GM10248 (cell line): ENCODE measurements at regions of chr3 and their contacts with region 1.

Region 1: DNA sequence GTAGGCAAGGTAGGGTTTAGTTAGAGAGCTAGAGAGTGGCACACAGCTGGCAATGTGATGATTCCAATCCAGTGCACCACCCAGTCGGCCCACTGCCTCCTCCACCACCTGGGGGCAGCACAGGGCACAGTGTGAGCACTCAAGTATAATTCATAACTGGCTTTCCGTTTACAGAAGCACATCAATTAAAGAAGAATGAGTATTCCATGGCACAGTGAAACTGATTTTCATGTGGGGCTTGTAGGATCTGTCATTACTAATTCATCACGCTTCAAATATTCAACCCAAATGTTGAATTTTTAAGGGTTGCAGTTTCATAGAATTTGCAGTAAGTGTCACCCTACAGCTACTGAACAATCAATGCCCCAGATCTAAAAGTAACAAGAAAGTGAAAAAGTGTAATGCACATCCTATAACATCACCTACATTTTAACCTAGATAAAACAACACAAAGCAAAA is 149.9 kb downstream of the IGSF11 start:
- DNase-seq: peak; percentile 32
- CTCF ChIP-seq: peak; percentile 88

Region 2: DNA sequence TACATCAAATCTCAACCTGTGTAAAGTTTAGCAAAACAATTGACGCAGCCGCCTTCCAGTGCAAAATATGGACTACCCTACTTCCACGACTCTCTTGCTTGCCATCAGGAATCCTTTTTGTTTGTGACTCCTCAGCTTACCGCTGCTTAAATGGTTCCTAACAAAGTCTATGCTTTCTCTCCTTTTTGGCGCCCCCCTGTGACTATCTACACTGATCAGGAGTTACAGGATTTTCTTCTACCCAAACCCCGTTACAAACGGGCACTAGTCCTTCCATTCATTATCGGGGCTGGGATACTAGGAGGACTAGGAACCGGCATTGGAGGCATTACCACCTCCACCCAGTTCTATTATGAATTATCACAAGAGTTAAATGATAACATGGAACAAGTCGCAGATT is 34.1 kb before region 1 on chr3:
- CTCF ChIA-PET with region 1: interaction called, 14 read pairs
- POLR2A ChIA-PET with region 1: no interaction called
- DNase-seq: no peak
- CTCF ChIP-seq: no peak

Region 3: DNA sequence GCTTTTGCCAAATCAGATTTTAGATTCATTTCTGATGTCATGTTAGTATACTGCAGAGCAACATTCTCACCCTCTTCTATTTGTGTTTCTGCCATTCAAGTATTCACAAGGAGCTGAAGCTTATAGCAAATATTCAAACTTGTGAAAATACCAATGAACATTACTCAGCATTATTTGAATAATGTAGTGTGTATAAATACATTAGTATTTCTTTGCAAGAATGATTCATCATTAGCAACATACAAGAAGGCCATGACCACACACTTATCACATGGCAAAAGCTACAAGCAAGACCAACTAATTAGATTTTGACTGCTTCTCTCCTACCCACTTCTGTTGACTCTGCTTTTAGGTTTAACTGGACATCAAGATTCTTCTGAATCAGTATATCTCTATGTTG is 25.0 kb after region 1 on chr3:
- CTCF ChIA-PET with region 1: interaction called, 35 read pairs
- POLR2A ChIA-PET with region 1: no interaction called
- DNase-seq: no peak
- CTCF ChIP-seq: no peak

Region 4: GRCh38 chr3:119042164-119042563 is 157.4 kb after region 1 on chr3:
- CTCF ChIA-PET with region 1: interaction called, 92 read pairs
- POLR2A ChIA-PET with region 1: no interaction called
- DNase-seq: no peak
- CTCF ChIP-seq: no peak

Region 5: DNA sequence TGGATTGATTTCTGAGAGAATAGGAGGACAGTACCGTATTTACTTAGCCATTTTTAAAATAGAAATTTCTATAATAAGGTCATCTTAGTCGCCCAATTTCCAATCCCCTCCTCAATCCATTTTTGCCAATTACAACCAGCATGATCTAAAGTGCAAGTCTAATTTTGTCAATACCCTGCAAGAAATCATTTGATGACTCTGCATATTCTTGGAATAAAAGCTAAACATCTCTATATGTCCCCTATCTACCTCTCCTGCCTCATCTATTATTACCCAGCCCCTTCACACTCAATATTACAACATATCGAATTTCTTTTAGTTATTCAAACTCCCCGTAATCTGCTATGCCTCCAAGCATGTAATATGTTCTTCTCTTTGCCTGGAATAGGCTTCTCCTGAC is 219.3 kb after region 1 on chr3:
- CTCF ChIA-PET with region 1: interaction called, 240 read pairs
- POLR2A ChIA-PET with region 1: no interaction called
- DNase-seq: no peak
- CTCF ChIP-seq: no peak

Region 6: DNA sequence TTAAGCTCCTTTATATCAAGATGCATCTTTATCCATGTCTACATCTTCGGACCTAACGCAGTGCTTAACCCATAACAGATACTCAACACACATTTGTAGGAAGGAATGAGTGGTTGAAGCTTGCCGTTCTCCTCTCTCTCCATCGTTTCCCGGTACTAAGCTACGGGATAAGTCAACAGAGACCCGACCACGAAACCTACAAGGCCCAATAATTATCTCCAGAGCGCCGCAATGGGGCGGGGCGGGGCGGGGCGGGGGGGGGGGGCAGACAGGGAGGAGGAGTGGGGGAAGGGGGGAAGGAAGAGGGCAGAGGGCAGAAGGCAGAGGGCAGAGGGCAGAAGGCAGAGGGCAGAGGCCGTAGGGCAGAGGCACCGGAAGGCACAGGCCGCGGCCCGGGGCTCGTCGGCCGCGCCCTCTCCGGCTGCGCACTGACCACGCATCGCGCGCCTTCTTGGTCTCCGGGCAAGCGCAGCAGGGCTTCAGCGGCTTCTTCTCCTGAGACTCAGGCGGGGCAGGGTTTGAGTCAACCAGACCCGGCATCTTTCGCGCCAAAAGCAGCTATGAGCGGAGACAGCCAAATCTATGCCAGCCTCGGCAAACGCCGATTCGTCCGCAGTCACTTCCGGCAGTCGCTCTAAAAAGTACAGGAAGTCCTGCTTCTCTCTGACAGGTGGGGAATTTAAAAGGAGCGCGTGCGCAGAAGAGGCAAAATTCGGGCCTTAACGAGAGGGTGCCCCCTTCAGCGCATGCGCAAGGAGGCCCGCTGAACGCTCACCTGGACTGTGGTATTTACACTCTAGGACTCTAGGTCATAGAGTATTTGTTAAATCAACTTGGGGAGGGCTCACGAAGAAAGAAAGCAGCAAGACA is 792.2 kb after region 1 on chr3 and contains the start of gene COX17:
- CTCF ChIA-PET with region 1: interaction called, 56 read pairs
- POLR2A ChIA-PET with region 1: no interaction called
- DNase-seq: peak; percentile 96
- CTCF ChIP-seq: no peak